ENCODE measurements at regions of chr14 and their contacts with region 1.

Region 1: GRCh38 chr14:52961060-52961639 is 10.3 kb upstream of the FERMT2 start:
- DNase-seq: peak; percentile 67
- ATAC-seq: peak; percentile 78
- H3K4me3 Mint-ChIP-seq: no peak overlapping the region
- H3K27ac Mint-ChIP-seq: no peak overlapping the region
- H3K4me1 Mint-ChIP-seq: peaks cover 6% of the 10 kb centered on the region
- H3K27me3 Mint-ChIP-seq: peaks cover 10% of the 10 kb centered on the region

Region 2: GRCh38 chr14:52755607-52756253 is 205.4 kb before region 1 on chr14:
- CTCF ChIA-PET with region 1: no interaction called
- POLR2A ChIA-PET with region 1: no interaction called
- DNase-seq: no peak
- ATAC-seq: no peak
- H3K4me3 Mint-ChIP-seq: no peak overlapping the region
- H3K27ac Mint-ChIP-seq: no peak overlapping the region
- H3K4me1 Mint-ChIP-seq: no peaks in the 10 kb centered on the region
- H3K27me3 Mint-ChIP-seq: no peaks in the 10 kb centered on the region

Region 3: GRCh38 chr14:52824507-52824906 is 136.6 kb before region 1 on chr14:
- CTCF ChIA-PET with region 1: interaction called, 35 read pairs
- POLR2A ChIA-PET with region 1: no interaction called
- DNase-seq: no peak
- ATAC-seq: no peak
- H3K4me3 Mint-ChIP-seq: no peak overlapping the region
- H3K27ac Mint-ChIP-seq: no peak overlapping the region
- H3K4me1 Mint-ChIP-seq: peaks cover 1% of the 10 kb centered on the region
- H3K27me3 Mint-ChIP-seq: peaks cover 9% of the 10 kb centered on the region

Region 4: GRCh38 chr14:52910572-52910971 is 50.6 kb before region 1 on chr14:
- CTCF ChIA-PET with region 1: no interaction called
- POLR2A ChIA-PET with region 1: no interaction called
- DNase-seq: no peak
- ATAC-seq: no peak
- H3K4me3 Mint-ChIP-seq: no peak overlapping the region
- H3K27ac Mint-ChIP-seq: no peak overlapping the region
- H3K4me1 Mint-ChIP-seq: no peaks in the 10 kb centered on the region
- H3K27me3 Mint-ChIP-seq: peaks cover 8% of the 10 kb centered on the region

Region 5: GRCh38 chr14:52950898-52951689 is 10.1 kb before region 1 on chr14 and contains the start of gene FERMT2:
- CTCF ChIA-PET with region 1: interaction called, 11 read pairs
- POLR2A ChIA-PET with region 1: no interaction called
- DNase-seq: no peak
- ATAC-seq: peak; percentile 71
- H3K4me3 Mint-ChIP-seq: peak within 1 kb of the TSS; percentile 77
- H3K27ac Mint-ChIP-seq: no peak within 1 kb of the TSS
- H3K4me1 Mint-ChIP-seq: peaks cover 18% of the 10 kb centered on the region
- H3K27me3 Mint-ChIP-seq: peaks cover 65% of the 10 kb centered on the region
- total RNA-seq, gene FERMT2: not detected